Right ventricle myocardium inferior (tissue), 1 donor: ENCODE measurements at regions of chr17 and their contacts with region 1.

Region 1: GRCh38 chr17:50067996-50068395 is 12.1 kb downstream of the ITGA3 start:
- DNase-seq: peak; percentile 5
- ATAC-seq: no peak

Region 2: DNA sequence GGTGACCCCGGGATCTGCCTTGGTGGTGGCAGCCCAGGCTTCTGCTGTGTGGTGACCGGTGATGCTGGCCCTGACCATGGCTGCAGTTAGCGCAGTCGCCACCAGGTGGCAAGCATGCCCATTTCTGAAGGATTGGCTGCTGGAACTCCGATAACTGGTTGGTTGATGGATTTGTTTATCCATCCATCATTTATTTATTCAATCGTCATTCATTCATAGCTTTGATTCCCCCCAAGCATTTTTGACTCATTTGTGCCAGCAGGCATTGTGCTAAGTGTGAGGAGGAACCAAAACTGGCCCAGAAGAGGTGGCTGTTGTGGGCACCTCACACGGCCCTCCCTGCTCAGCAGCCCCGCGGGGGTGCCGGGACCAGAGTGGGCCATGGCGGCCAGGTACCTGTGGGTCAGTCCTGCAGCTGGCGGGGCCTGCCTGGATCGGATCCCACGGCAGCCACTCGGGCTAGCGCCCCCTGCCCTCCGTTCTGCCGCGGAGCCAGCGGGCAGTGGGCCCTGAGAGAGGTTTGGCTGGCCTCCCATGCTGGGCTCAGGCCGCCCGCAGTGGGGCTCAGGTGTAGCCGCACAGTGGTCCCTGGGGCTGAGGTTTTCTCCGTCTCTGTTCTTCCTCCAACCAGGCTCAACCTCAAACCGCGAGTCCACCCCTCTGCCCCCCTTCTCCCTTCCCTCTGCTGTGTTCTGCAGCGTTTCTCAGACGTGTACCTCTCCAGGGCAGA is 40.9 kb before region 1 on chr17:
- intact Hi-C with region 1: no loop called
- DNase-seq: peak; percentile 88
- ATAC-seq: peak; percentile 79

Region 3: DNA sequence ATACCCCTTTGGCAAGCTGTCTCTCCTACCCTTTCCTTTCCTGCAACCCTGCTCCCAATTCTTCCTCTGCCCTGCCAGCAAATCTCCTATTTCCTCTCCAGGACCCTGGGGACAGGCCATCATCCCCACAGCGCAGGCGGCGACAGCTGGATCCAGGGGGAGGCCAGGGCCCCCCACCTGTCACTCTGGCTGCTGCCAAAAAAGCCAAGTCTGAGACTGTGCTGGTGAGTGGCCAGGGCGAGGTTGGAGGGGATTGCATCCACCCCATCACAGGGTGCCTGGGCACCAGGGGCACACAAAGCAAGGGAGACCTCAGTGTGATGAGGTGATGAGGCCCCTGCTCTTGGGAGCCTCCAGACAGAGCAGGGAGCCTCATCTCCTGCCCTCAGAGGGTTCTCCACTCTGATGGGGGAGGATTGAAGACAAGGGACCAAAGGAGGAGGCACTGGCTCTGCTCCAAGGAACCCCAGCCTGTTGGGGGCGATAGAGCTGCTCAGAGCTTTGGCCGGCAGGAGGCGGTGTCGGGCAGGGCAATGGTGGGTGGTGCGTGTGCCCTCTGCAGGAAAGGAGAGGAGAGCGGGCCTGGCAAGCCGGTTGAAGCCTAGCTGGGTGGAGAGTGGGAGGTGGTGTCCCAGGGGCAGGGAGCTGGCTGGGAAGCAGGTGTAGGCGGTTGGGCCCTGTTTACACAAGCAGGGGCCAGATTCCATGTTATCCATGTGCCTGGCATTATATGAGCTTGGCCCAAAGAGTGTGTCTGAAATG is 11.5 kb after region 1 on chr17:
- intact Hi-C with region 1: loop called (anchors 1 kb)
- DNase-seq: peak; percentile 47
- ATAC-seq: no peak